ENCODE measurements at regions of chr9 and their contacts with region 1.

Region 1: DNA sequence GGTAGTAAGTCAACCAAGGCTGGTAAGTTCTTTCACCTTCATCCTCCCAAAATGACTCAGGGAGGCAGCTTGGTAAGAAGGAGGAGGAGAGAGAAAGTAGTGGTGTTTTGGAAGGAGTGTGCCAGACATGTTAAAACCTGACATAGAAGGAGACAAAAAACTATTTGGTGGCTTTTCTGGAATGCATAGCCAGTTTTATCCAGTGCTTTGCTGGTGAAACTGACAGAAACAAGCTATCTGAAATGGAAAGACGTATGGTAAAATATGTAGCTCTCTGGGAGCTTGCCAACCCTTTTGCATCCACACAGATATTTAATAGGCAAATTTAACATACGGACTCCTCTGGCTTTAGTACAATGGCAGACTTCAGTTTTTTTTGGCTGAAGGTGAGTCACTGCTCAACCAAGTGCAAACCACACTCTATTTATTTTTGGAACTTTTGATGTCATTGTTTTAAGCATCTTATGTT is 45.4 kb downstream of the RAB14 start:
- DNase-seq: peak; percentile 65
- ATAC-seq: peak; percentile 64
- H3K4me3 ChIP-seq: no peak overlapping the region
- H3K27ac ChIP-seq: peak overlapping the region; percentile 62
- H3K4me1 ChIP-seq: peaks cover 31% of the 10 kb centered on the region
- H3K27me3 ChIP-seq: no peaks in the 10 kb centered on the region
- CTCF ChIP-seq: no peak

Region 2: GRCh38 chr9:121121582-121122087 is 34.7 kb before region 1 on chr9:
- CTCF ChIA-PET with region 1: no interaction called
- POLR2A ChIA-PET with region 1: no interaction called
- intact Hi-C with region 1: loop called (anchors 2 kb)
- DNase-seq: peak; percentile 91
- ATAC-seq: peak; percentile 100
- H3K4me3 ChIP-seq: peak overlapping the region; percentile 72
- H3K27ac ChIP-seq: peak overlapping the region; percentile 26
- H3K4me1 ChIP-seq: peaks cover 14% of the 10 kb centered on the region
- H3K27me3 ChIP-seq: no peaks in the 10 kb centered on the region
- CTCF ChIP-seq: no peak

Region 3: DNA sequence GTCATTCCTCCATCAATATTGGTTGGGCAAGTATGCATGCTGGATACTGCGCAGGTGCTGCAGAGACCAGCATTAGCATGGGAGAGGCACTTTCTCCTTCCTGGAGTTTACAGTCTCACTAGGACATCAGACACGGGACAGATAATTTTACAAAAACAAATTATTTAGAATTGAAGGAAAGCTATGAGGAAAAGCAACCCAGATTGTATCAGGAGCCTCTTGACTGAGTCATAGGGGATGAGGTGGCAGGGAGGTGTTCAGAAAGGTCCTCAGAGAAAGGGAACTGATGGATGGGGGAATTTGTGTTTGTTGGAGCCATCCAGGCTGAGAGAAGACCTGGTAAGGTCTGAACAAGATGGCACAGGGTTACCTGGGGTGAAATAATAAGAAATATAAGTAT is 69.9 kb after region 1 on chr9:
- CTCF ChIA-PET with region 1: no interaction called
- POLR2A ChIA-PET with region 1: no interaction called
- intact Hi-C with region 1: no loop called
- DNase-seq: peak; percentile 45
- ATAC-seq: peak; percentile 53; the same call in 1 of the 2 replicates
- H3K4me3 ChIP-seq: no peak overlapping the region
- H3K27ac ChIP-seq: no peak overlapping the region
- H3K4me1 ChIP-seq: peaks cover 7% of the 10 kb centered on the region
- H3K27me3 ChIP-seq: no peaks in the 10 kb centered on the region
- CTCF ChIP-seq: no peak